BJ (cell line): ENCODE measurements at regions of chr1 and their contacts with region 1.

Region 1: GRCh38 chr1:171226747-171227370 is 21.4 kb upstream of the FMO1 start:
- DNase-seq: no peak
- H3K4me3 ChIP-seq: no peak overlapping the region
- H3K27me3 ChIP-seq: no peaks in the 10 kb centered on the region
- CTCF ChIP-seq: peak; percentile 77

Region 2: DNA sequence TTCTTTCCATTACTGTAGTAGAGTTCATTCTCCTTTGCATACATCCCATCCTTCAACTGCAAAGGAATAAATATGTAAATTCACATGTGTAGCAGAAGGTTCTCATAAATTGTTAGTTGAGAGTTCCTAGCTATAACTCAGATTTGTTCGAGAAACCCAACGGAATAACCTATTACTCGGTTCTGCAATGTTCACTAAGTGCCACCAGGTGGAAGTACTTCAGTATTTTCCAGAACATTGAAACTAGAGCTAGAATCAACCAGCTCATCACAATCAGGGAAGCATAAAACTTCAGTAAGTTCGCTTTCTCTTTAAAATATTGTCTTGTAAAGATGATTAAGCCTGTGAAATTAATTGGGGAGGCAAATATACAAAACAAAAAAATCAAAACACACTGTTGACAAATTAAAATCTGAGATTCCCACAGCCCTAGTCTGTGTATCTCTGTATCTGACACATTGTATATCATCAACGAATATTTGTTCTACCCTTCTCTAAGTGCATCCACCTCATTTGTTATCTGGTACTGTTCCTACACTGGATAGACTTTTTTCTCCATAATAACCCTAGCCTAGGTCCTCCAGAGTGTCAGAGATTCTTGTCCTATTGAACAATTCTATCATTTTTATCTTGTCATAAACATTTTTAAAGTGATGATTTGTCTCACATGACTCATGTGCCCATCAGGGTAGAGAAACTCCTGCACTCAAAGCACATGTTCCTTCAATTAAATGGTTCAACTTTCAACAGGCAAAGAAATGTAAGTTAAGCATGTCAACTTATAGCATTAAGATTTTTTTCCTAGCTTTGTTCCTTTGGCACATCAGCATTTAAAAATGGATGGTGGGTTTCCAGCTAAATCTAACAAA is 259.6 kb before region 1 on chr1:
- CTCF ChIA-PET with region 1: interaction called, 34 read pairs
- POLR2A ChIA-PET with region 1: no interaction called
- DNase-seq: peak; percentile 19
- H3K4me3 ChIP-seq: no peak overlapping the region
- H3K27me3 ChIP-seq: no peaks in the 10 kb centered on the region
- CTCF ChIP-seq: peak; percentile 72

Region 3: GRCh38 chr1:171014878-171015277 is 212.0 kb before region 1 on chr1:
- CTCF ChIA-PET with region 1: no interaction called
- POLR2A ChIA-PET with region 1: no interaction called
- DNase-seq: no peak
- H3K4me3 ChIP-seq: no peak overlapping the region
- H3K27me3 ChIP-seq: no peaks in the 10 kb centered on the region
- CTCF ChIP-seq: no peak

Region 4: GRCh38 chr1:171141688-171142415 is 85.0 kb before region 1 on chr1:
- CTCF ChIA-PET with region 1: interaction called, 29 read pairs
- POLR2A ChIA-PET with region 1: no interaction called
- DNase-seq: peak; percentile 100
- H3K4me3 ChIP-seq: no peak overlapping the region
- H3K27me3 ChIP-seq: no peaks in the 10 kb centered on the region
- CTCF ChIP-seq: peak; percentile 54

Region 5: GRCh38 chr1:171180670-171181069 is 46.2 kb before region 1 on chr1:
- CTCF ChIA-PET with region 1: interaction called, 19 read pairs
- POLR2A ChIA-PET with region 1: no interaction called
- DNase-seq: no peak
- H3K4me3 ChIP-seq: no peak overlapping the region
- H3K27me3 ChIP-seq: no peaks in the 10 kb centered on the region
- CTCF ChIP-seq: no peak

Region 6: DNA sequence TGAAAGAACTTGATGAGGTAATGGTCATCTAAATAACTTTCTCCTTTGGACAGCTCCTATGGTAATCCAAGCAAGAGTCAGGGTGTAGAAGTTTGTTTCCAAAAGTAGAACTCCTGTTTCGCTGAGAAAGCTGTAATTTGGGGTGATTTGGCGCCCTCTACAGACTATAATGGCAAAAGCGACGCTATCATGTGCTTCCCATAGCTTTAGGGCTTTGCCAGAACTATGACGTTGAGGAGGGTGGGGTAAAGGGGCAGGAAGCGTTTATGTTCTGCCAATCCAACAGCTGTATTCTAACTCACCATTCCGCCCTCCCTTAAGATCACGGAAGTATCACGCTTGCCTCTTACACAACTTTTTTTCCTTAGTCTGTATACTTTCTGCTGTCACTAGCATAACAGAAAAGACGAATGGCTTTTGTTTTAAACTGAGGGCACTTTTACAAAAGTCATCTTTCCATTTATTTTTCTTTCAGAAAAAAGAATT is 87.0 kb after region 1 on chr1 and contains the start of gene FMO4:
- CTCF ChIA-PET with region 1: interaction called, 53 read pairs
- POLR2A ChIA-PET with region 1: interaction called, 8 read pairs
- DNase-seq: peak; percentile 99
- H3K4me3 ChIP-seq: peak within 1 kb of the TSS; percentile 25
- H3K27me3 ChIP-seq: no peaks in the 10 kb centered on the region
- CTCF ChIP-seq: peak; percentile 79
- polyA plus RNA-seq, gene FMO4: 4.2 and 7.5 TPM in 2 replicates

Region 7: GRCh38 chr1:171405391-171405714 is 178.5 kb after region 1 on chr1:
- CTCF ChIA-PET with region 1: no interaction called
- POLR2A ChIA-PET with region 1: no interaction called
- DNase-seq: no peak
- H3K4me3 ChIP-seq: no peak overlapping the region
- H3K27me3 ChIP-seq: no peaks in the 10 kb centered on the region
- CTCF ChIP-seq: no peak